Activated CD8-positive, alpha-beta T cell treated with anti-CD3 and anti-CD28 coated beads for 36 hours (primary cell): ENCODE measurements at regions of chr15 and their contacts with region 1.

Region 1: GRCh38 chr15:91055548-91056331 is 33.3 kb upstream of the VPS33B start:
- DNase-seq: peak; percentile 54
- ATAC-seq: peak; percentile 47
- H3K4me3 Mint-ChIP-seq: no peak overlapping the region
- H3K27ac Mint-ChIP-seq: no peak overlapping the region
- H3K4me1 Mint-ChIP-seq: no peaks in the 10 kb centered on the region
- H3K27me3 Mint-ChIP-seq: peaks cover 38% of the 10 kb centered on the region
- CTCF ChIP-seq: peak; percentile 87

Region 2: GRCh38 chr15:91043202-91043874 is 12.4 kb before region 1 on chr15:
- CTCF ChIA-PET with region 1: interaction called, 10 read pairs
- POLR2A ChIA-PET with region 1: no interaction called
- intact Hi-C with region 1: no loop called
- DNase-seq: no peak
- ATAC-seq: no peak
- H3K4me3 Mint-ChIP-seq: no peak overlapping the region
- H3K27ac Mint-ChIP-seq: no peak overlapping the region
- H3K4me1 Mint-ChIP-seq: peaks cover 10% of the 10 kb centered on the region
- H3K27me3 Mint-ChIP-seq: no peaks in the 10 kb centered on the region
- CTCF ChIP-seq: no peak

Region 3: GRCh38 chr15:91214675-91215590 is 159.2 kb after region 1 on chr15:
- CTCF ChIA-PET with region 1: interaction called, 16 read pairs
- POLR2A ChIA-PET with region 1: no interaction called
- intact Hi-C with region 1: no loop called
- DNase-seq: no peak
- ATAC-seq: no peak
- H3K4me3 Mint-ChIP-seq: no peak overlapping the region
- H3K27ac Mint-ChIP-seq: no peak overlapping the region
- H3K4me1 Mint-ChIP-seq: no peaks in the 10 kb centered on the region
- H3K27me3 Mint-ChIP-seq: peaks cover 16% of the 10 kb centered on the region
- CTCF ChIP-seq: no peak

Region 4: DNA sequence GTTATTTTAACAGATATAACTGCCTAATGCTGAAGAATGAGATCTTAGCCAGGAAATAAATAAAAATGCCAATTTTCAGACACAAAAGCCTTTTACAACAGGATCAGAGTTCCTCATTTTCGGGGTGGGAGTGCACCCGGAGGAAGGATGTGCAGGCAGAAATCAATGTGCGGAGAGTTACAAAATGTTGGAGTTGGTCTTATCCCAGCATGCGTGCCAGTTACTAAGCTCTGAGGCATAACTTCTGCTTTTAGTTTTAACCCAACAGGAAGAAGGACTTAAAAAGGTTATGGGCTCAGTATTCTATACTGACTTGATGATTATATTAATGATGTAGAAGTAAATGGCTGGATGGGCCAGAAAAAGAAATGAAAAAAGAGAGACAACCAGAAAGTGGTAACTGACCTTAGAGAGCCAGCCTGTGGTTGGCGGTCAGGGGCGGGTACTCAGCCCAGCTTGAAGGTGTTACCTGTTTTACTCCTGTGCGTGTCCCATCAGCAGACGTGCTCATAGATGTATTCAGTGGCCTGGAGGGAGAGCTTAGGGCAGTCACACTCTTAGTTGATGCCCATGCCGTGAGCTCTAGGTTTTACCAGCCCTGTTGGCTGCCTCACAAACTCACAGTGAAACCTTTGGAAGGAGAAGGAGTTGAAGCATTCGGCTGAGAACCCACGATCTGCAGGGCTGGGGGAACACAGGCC is 209.1 kb after region 1 on chr15:
- CTCF ChIA-PET with region 1: interaction called, 29 read pairs
- POLR2A ChIA-PET with region 1: no interaction called
- intact Hi-C with region 1: no loop called
- DNase-seq: no peak
- ATAC-seq: no peak
- H3K4me3 Mint-ChIP-seq: no peak overlapping the region
- H3K27ac Mint-ChIP-seq: no peak overlapping the region
- H3K4me1 Mint-ChIP-seq: no peaks in the 10 kb centered on the region
- H3K27me3 Mint-ChIP-seq: peaks cover 12% of the 10 kb centered on the region
- CTCF ChIP-seq: no peak